Activated B cell treated with CpG ODN at 0.5 μM for 24 hours (primary cell): ENCODE measurements at regions of chr6 and their contacts with region 1.

Region 1: DNA sequence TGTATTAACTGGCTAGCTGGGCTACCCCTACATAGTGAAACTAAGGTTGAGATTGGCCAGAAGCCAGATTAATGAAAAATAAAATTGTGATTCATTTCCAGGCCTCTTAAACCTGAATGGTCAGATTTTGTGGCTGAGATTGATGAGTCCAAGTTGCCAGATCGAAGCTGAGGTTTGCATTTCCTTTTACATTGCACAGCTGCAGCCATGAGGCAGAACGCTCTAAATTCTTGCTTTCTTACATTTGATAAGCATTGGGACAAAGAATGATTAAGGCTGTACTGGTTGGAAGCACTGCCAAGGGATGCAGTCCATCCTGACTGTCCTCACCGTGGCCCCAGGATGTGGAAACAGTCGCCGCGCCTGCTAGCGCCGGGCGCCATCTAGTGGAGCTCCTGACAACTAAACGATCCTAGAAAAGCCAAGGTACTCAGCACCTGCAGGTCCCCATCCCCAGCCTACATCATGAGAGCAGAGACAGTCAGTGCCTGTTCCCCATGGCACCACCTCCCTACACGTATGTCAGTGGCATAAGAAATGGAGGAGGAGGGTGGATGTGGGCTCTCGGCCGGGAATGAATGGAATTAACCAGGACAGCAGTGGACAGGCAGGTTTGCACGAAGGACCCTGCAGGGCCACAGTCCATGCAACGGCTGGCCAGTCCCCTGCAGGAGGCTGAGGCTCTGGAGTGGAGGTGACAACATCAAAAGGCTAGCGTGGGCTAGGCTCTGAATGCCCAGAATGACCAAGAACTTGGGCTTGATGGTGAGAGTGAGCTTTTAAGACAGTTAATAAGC is 19.0 kb downstream of the PXDC1 start:
- DNase-seq: peak; percentile 54
- ATAC-seq: peak; percentile 61
- H3K4me3 Mint-ChIP-seq: no peak overlapping the region
- H3K27ac Mint-ChIP-seq: no peak overlapping the region
- H3K4me1 Mint-ChIP-seq: peaks cover 2% of the 10 kb centered on the region
- H3K27me3 Mint-ChIP-seq: peaks cover 2% of the 10 kb centered on the region
- CTCF ChIP-seq: no peak

Region 2: DNA sequence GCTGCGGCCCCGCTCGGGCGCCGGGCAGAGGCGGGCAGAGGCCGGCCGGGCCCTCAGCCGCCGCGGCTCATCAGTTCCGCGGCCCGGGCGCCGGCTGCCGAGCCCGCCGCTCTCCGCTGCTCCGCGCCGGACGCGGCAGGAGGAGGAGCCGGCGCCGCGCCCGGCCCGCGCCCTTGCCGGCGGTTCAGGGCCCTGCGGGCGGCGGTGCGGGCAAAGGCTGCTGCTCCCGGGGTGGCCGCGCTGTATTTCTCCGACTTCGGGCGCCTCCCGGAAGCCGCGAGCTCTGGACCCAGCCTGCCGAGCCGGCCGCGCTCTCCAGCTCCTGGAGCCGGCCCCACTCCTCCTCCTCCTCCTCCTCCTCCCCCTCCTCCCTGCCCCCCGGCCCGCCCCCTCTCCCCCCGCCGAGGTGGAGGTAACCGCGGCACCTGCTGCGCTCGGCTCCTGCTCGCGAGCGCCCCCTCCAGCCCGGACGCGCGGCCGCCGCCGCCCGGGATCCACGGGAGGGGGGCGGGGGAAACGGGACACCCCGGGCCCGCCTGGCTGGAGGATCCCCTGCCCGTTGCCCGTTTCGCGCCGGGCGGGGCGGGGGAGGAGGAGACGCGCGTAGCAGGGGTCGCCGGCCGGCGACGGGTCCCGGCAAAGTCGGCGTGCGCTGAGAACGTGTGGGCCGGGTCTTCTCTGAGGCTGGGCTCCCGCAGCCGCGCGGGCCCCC is 275.6 kb before region 1 on chr6 and contains the start of gene SLC22A23:
- CTCF ChIA-PET with region 1: interaction called, 4 read pairs
- POLR2A ChIA-PET with region 1: no interaction called
- intact Hi-C with region 1: loop called (anchors 5 kb)
- DNase-seq: peak; percentile 67
- ATAC-seq: peak; percentile 73
- H3K4me3 Mint-ChIP-seq: peak within 1 kb of the TSS; percentile 68
- H3K27ac Mint-ChIP-seq: peak within 1 kb of the TSS; percentile 4
- H3K4me1 Mint-ChIP-seq: peaks cover 5% of the 10 kb centered on the region
- H3K27me3 Mint-ChIP-seq: peaks cover 25% of the 10 kb centered on the region
- CTCF ChIP-seq: no peak
- total RNA-seq, gene SLC22A23: 0.24 and 0.95 TPM in 2 replicates